Panc1 (cell line): ENCODE measurements at regions of chr10 and their contacts with region 1.

Region 1: DNA sequence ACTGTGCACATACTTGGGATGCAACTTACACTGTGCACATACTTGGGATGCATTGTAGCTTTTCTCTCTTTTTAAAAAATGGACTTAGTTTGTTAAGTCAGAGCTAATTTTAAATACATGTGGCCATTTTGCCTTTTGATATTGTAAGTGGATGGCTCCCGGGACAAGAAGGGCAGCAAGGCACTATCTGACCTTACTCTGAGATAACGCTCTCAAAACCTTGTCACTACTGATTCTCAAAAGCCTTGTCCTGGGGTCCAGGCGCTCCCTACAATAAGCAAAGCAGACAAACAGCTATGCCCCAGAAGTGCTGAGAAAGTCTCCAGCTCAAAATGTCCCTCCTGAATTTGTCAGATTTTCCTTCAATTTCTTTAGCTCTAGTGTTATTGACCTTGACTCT is 66.9 kb upstream of the CACNB2 start:
- DNase-seq: no peak
- ATAC-seq: no peak
- H3K4me3 ChIP-seq: no peak overlapping the region
- H3K27ac ChIP-seq: no peak overlapping the region
- H3K4me1 ChIP-seq: no peaks in the 10 kb centered on the region
- H3K27me3 ChIP-seq: no peaks in the 10 kb centered on the region
- CTCF ChIP-seq: no peak

Region 2: DNA sequence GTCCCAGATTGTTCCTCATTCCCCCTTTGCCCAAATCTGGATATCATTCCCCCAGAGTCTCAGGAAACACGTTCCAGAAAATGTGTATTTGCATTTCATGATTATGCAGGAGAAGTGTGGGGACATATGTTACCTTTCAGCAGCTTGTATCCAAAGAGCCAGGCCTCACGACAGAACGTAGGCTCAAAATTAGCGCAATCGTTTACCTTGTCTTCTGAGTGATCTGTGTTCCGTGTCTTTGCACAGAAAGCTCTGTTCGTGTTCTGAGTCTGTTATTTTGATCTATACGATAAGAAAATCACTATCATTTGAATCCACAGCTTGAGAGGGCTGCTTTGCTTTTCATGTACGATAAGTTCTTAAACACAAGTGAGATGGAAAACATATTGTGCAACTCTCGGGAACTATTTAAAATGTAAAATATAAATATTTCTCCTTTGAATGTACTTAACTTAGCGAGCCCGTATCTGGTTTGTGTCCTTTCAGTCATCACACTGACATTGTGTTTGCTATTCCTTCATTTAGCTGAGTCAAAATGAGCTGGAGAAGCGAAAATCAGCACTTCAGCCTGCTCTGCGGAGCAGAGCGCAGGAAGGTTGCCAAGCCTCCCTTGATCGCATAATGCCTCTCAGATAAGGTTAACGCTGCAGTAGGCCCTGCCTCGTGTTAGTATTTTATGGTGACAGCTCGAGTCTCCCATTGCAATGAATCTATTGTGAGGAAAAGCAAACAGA is 13.3 kb before region 1 on chr10:
- CTCF ChIA-PET with region 1: no interaction called
- POLR2A ChIA-PET with region 1: interaction called, 10 read pairs
- in situ Hi-C with region 1: no loop called
- intact Hi-C with region 1: no loop called
- DNase-seq: no peak
- ATAC-seq: no peak
- H3K4me3 ChIP-seq: no peak overlapping the region
- H3K27ac ChIP-seq: no peak overlapping the region
- H3K4me1 ChIP-seq: no peaks in the 10 kb centered on the region
- H3K27me3 ChIP-seq: no peaks in the 10 kb centered on the region
- CTCF ChIP-seq: no peak